H1 (cell line): ENCODE measurements at regions of chr21 and their contacts with region 1.

Region 1: GRCh38 chr21:36976882-36977651 is 10.6 kb upstream of the HLCS start:
- DNase-seq: peak in 1 of 2 experiments; percentile 58
- H3K4me3 ChIP-seq: no peak overlapping the region
- H3K27ac ChIP-seq: no peak overlapping the region
- H3K4me1 ChIP-seq: peaks cover 1 to 5% (median 3%) of the 10 kb centered on the region in 4 experiments; a peak in 6 of 7 replicates
- H3K27me3 ChIP-seq: peaks cover 0 to 15% (median 6%) of the 10 kb centered on the region in 4 experiments; a peak in 5 of 7 replicates
- CTCF ChIP-seq: peak in 2 of 3 experiments; percentile 85 to 99; a peak in 3 of 4 replicates
- EP300 ChIP-seq: no peak
- POLR2A ChIP-seq: no peak
- RAD21 ChIP-seq: peak; percentile 87 to 88

Region 2: GRCh38 chr21:36934864-36935420 is 42.1 kb before region 1 on chr21:
- CTCF ChIA-PET with region 1: no interaction called
- POLR2A ChIA-PET with region 1: no interaction called
- DNase-seq: no peak
- H3K4me3 ChIP-seq: no peak overlapping the region
- H3K27ac ChIP-seq: no peak overlapping the region
- H3K4me1 ChIP-seq: no peaks in the 10 kb centered on the region; a peak in 1 of 7 replicates
- H3K27me3 ChIP-seq: no peaks in the 10 kb centered on the region
- CTCF ChIP-seq: no peak
- EP300 ChIP-seq: no peak
- POLR2A ChIP-seq: no peak
- RAD21 ChIP-seq: no peak

Region 3: DNA sequence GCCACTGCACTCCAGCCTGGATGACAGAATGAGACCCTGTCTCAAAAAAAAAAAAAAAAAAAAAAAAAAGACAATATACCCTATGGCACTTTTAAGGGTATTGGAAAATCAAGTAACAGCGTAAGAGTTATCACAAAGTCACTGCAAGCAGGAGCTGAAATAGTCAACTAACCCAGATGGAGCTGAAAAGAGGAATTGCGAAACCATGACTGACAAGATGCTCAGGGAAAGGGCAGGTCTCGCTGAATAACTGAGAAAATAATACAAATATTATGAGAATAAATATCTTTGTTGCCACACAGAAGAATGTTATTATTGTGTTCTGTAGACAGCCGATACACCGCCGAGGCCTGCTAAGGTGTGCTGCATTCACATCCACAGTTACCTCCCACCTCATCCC is 28.4 kb before region 1 on chr21:
- CTCF ChIA-PET with region 1: interaction called, 10 read pairs
- POLR2A ChIA-PET with region 1: no interaction called
- DNase-seq: no peak
- H3K4me3 ChIP-seq: no peak overlapping the region
- H3K27ac ChIP-seq: no peak overlapping the region
- H3K4me1 ChIP-seq: peaks cover 3 to 8% (median 7%) of the 10 kb centered on the region in 4 experiments; a peak in 6 of 7 replicates
- H3K27me3 ChIP-seq: peaks cover 0 to 8% (median 3%) of the 10 kb centered on the region in 4 experiments; a peak in 4 of 7 replicates
- CTCF ChIP-seq: no peak
- EP300 ChIP-seq: no peak
- POLR2A ChIP-seq: no peak
- RAD21 ChIP-seq: no peak

Region 4: DNA sequence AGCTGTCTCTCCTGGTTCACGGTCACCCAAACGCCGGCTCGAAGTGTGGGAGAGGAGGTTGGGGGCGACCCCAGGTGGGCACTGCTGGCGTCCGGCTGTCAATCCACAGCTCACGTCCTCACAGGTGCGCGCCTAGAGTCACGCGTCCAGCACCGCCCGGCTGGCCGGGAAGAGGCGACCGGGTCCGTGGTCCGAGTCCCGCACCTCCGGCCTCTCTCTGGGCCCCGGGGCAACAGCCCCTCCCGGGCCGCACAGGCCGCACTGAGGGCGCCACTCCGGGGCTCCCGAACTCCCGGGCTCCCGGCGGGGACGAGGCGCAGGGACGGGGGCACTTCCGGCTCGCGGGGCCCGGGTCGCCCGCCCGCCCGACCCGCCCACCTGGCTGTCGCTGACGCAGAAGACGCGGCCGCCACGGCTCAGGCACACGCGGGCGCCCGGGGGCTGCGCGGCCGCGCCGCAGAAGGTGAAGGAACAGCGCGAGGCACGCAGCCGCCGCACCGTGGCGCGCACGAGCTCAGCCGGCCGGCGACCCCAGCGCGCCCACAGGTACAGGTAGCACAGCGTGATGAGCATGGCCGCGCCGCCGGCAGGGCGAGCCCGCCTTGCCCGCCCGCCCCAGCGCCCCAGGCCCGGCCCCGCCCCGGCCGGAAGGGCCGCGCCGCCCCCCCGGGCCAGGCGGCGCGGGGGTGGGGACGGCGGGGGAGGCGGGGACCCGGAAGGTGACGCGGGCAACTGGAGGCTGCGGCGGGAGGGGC is 10.8 kb before region 1 on chr21 and contains the start of gene HLCS:
- CTCF ChIA-PET with region 1: interaction called, 42 read pairs
- POLR2A ChIA-PET with region 1: interaction called, 4 read pairs
- DNase-seq: peak in 1 of 2 experiments; percentile 75
- H3K4me3 ChIP-seq: peak within 1 kb of the TSS; percentile 46 to 78 (median 62)
- H3K27ac ChIP-seq: no peak within 1 kb of the TSS; the same call in 1 of the 2 replicates
- H3K4me1 ChIP-seq: peaks cover 0 to 6% (median 1%) of the 10 kb centered on the region in 4 experiments; a peak in 3 of 7 replicates
- H3K27me3 ChIP-seq: no peaks in the 10 kb centered on the region
- CTCF ChIP-seq: peak; percentile 44 to 74 (median 49)
- EP300 ChIP-seq: no peak
- POLR2A ChIP-seq: peak in 1 of 2 experiments; percentile 44; a peak in 2 of 3 replicates
- RAD21 ChIP-seq: peak in 1 of 2 experiments; percentile 36; a peak in 1 of 4 replicates
- total RNA-seq, gene HLCS: 12.2 and 14.2 TPM in 2 replicates

Region 5: GRCh38 chr21:36989699-36990507 is 12.8 kb after region 1 on chr21:
- CTCF ChIA-PET with region 1: interaction called, 89 read pairs
- POLR2A ChIA-PET with region 1: interaction called, 5 read pairs
- DNase-seq: peak; percentile 57 to 99
- H3K4me3 ChIP-seq: peak overlapping the region; percentile 46 to 70 (median 52)
- H3K27ac ChIP-seq: peak overlapping the region; percentile 70
- H3K4me1 ChIP-seq: peaks cover 3 to 16% (median 6%) of the 10 kb centered on the region in 4 experiments
- H3K27me3 ChIP-seq: peaks cover 0 to 3% (median 0%) of the 10 kb centered on the region in 4 experiments; a peak in 1 of 7 replicates
- CTCF ChIP-seq: peak; percentile 80 to 93 (median 82)
- EP300 ChIP-seq: no peak
- POLR2A ChIP-seq: peak; percentile 49 to 64; a peak in 2 of 3 replicates
- RAD21 ChIP-seq: peak; percentile 29 to 53; a peak in 3 of 4 replicates

Region 6: GRCh38 chr21:37009740-37010341 is 32.8 kb after region 1 on chr21:
- CTCF ChIA-PET with region 1: interaction called, 17 read pairs
- POLR2A ChIA-PET with region 1: interaction called, 6 read pairs
- DNase-seq: peak; percentile 79 to 97
- H3K4me3 ChIP-seq: peak overlapping the region in 2 of 4 experiments; percentile 7 to 38; a peak in 4 of 8 replicates
- H3K27ac ChIP-seq: no peak overlapping the region
- H3K4me1 ChIP-seq: peaks cover 0 to 8% (median 0%) of the 10 kb centered on the region in 4 experiments; a peak in 2 of 7 replicates
- H3K27me3 ChIP-seq: peaks cover 5 to 37% (median 27%) of the 10 kb centered on the region in 4 experiments
- CTCF ChIP-seq: peak; percentile 82 to 97 (median 93)
- EP300 ChIP-seq: no peak
- POLR2A ChIP-seq: no peak
- RAD21 ChIP-seq: peak; percentile 68 to 81

Region 7: GRCh38 chr21:37098751-37099150 is 121.7 kb after region 1 on chr21:
- CTCF ChIA-PET with region 1: no interaction called
- POLR2A ChIA-PET with region 1: no interaction called
- DNase-seq: no peak
- H3K4me3 ChIP-seq: no peak overlapping the region
- H3K27ac ChIP-seq: no peak overlapping the region
- H3K4me1 ChIP-seq: no peaks in the 10 kb centered on the region
- H3K27me3 ChIP-seq: no peaks in the 10 kb centered on the region
- CTCF ChIP-seq: no peak
- EP300 ChIP-seq: no peak
- POLR2A ChIP-seq: no peak
- RAD21 ChIP-seq: no peak

Region 8: GRCh38 chr21:38075831-38076587 is 1098.9 kb after region 1 on chr21:
- CTCF ChIA-PET with region 1: no interaction called
- POLR2A ChIA-PET with region 1: no interaction called
- DNase-seq: no peak
- H3K4me3 ChIP-seq: no peak overlapping the region
- H3K27ac ChIP-seq: no peak overlapping the region
- H3K4me1 ChIP-seq: no peaks in the 10 kb centered on the region; a peak in 1 of 7 replicates
- H3K27me3 ChIP-seq: no peaks in the 10 kb centered on the region
- CTCF ChIP-seq: no peak
- EP300 ChIP-seq: no peak
- POLR2A ChIP-seq: no peak
- RAD21 ChIP-seq: no peak